ENCODE measurements at regions of chr17 and their contacts with region 1.

Region 1: GRCh38 chr17:43483674-43484372 is at the start of gene DHX8:
- DNase-seq: peak; percentile 98
- H3K4me3 ChIP-seq: peak within 1 kb of the TSS; percentile 62 to 85 (median 76)
- H3K27ac ChIP-seq: peak within 1 kb of the TSS; percentile 81 to 93 (median 88)
- H3K4me1 ChIP-seq: peaks cover 16 to 30% (median 22%) of the 10 kb centered on the region in 4 donors
- H3K27me3 ChIP-seq: no peaks in the 10 kb centered on the region
- CTCF ChIP-seq: peak; percentile 100
- EP300 ChIP-seq: no peak
- POLR2A ChIP-seq: peak; percentile 85
- total RNA-seq, gene DHX8: 15.3 to 44.9 (median 36.4) TPM

Region 2: GRCh38 chr17:43211480-43212402 is 272.1 kb before region 1 on chr17 and contains the start of gene TMEM106A:
- in situ Hi-C with region 1: loop called in 1 of 4 experiments (anchors 25 kb)
- intact Hi-C with region 1: no loop called
- DNase-seq: peak; percentile 82
- H3K4me3 ChIP-seq: peak within 1 kb of the TSS; percentile 38 to 54 (median 46)
- H3K27ac ChIP-seq: peak within 1 kb of the TSS; percentile 79 to 87 (median 86)
- H3K4me1 ChIP-seq: peaks cover 9 to 28% (median 23%) of the 10 kb centered on the region in 4 donors
- H3K27me3 ChIP-seq: no peaks in the 10 kb centered on the region
- CTCF ChIP-seq: peak; percentile 3 to 54 (median 34)
- EP300 ChIP-seq: no peak
- POLR2A ChIP-seq: peak; percentile 60
- total RNA-seq, gene TMEM106A: 4.1 to 24.3 (median 7.9) TPM

Region 3: GRCh38 chr17:43393944-43394482 is 89.8 kb before region 1 on chr17:
- in situ Hi-C with region 1: loop called in 3 of 4 experiments (anchors 5 kb)
- intact Hi-C with region 1: loop called (anchors 1 kb)
- DNase-seq: peak; percentile 94
- H3K4me3 ChIP-seq: peak overlapping the region in 1 of 4 donors; percentile 13
- H3K27ac ChIP-seq: peak overlapping the region; percentile 39 to 73 (median 66)
- H3K4me1 ChIP-seq: peaks cover 0 to 24% (median 11%) of the 10 kb centered on the region in 4 donors
- H3K27me3 ChIP-seq: no peaks in the 10 kb centered on the region
- CTCF ChIP-seq: peak; percentile 90 to 99 (median 97)
- EP300 ChIP-seq: no peak
- POLR2A ChIP-seq: no peak

Region 4: DNA sequence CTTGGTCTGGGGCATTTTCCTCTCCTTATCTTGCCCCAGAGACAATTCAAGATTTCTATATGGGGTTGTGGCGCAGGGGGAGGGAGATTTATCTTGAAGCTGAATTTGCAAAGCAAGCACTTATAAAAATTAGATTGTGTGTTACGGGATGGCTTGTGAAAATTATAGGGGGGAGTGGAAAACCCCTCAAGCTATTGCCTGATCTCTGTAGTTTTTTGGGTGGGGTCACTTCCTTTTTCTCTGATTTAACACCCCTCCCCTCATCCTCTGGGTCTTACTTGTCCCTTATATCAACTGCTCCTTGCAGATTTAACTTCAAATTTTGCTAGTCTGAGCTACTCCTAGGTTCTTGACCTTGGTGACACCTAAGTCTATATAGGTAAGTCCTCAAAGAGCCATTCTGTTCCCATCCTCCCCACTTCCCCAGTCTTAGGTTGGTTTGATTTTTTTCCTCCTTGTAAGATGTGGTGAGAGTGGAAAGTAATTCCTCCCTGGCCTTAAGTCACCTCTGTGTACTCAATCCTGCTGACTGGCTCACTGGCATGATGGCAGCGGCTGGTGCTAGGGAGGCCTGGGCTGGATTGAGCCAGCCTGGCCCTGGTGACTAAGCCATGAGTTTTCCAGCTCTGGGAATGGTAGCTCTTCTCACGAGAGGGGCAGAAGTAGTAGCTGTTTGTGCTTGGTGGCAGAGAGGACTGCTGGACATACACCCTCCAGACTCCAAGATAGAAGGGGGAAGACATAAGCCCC is 82.7 kb before region 1 on chr17:
- in situ Hi-C with region 1: loop called in 3 of 4 experiments (anchors 5 kb)
- intact Hi-C with region 1: no loop called
- DNase-seq: no peak
- H3K4me3 ChIP-seq: peak overlapping the region in 3 of 4 donors; percentile 60 to 76 (median 74)
- H3K27ac ChIP-seq: peak overlapping the region; percentile 49 to 94 (median 88)
- H3K4me1 ChIP-seq: peaks cover 0 to 31% (median 6%) of the 10 kb centered on the region in 4 donors
- H3K27me3 ChIP-seq: no peaks in the 10 kb centered on the region
- CTCF ChIP-seq: no peak
- EP300 ChIP-seq: no peak
- POLR2A ChIP-seq: no peak

Region 5: GRCh38 chr17:43431714-43432523 is 51.9 kb before region 1 on chr17:
- in situ Hi-C with region 1: no loop called
- intact Hi-C with region 1: loop called (anchors 5 kb)
- DNase-seq: no peak
- H3K4me3 ChIP-seq: no peak overlapping the region
- H3K27ac ChIP-seq: no peak overlapping the region
- H3K4me1 ChIP-seq: peaks cover 0 to 5% (median 0%) of the 10 kb centered on the region in 4 donors
- H3K27me3 ChIP-seq: no peaks in the 10 kb centered on the region
- CTCF ChIP-seq: no peak
- EP300 ChIP-seq: no peak
- POLR2A ChIP-seq: no peak

Measured in transverse colon (tissue), 4 donors.